A549 (cell line): ENCODE measurements at regions of chr7 and their contacts with region 1.

Region 1: GRCh38 chr7:99040104-99040958 is 103.6 kb downstream of the SMURF1 start:
- DNase-seq: peak; percentile 90 to 95
- ATAC-seq: peak; percentile 80 to 85
- H3K4me3 ChIP-seq: no peak overlapping the region
- H3K27ac ChIP-seq: peak overlapping the region; percentile 69 to 72
- H3K4me1 ChIP-seq: peaks cover 16% of the 10 kb centered on the region
- CTCF ChIP-seq: peak; percentile 83
- EP300 ChIP-seq: no peak
- POLR2A ChIP-seq: no peak
- RAD21 ChIP-seq: peak; percentile 95 to 96

Region 2: GRCh38 chr7:99029466-99030435 is 10.6 kb before region 1 on chr7:
- CTCF ChIA-PET with region 1: interaction called, 19 read pairs
- POLR2A ChIA-PET with region 1: no interaction called
- DNase-seq: no peak
- ATAC-seq: no peak
- H3K4me3 ChIP-seq: no peak overlapping the region
- H3K27ac ChIP-seq: no peak overlapping the region
- H3K4me1 ChIP-seq: peaks cover 8% of the 10 kb centered on the region; the same call in 1 of the 3 replicates
- CTCF ChIP-seq: no peak
- EP300 ChIP-seq: no peak
- POLR2A ChIP-seq: no peak
- RAD21 ChIP-seq: no peak

Region 3: DNA sequence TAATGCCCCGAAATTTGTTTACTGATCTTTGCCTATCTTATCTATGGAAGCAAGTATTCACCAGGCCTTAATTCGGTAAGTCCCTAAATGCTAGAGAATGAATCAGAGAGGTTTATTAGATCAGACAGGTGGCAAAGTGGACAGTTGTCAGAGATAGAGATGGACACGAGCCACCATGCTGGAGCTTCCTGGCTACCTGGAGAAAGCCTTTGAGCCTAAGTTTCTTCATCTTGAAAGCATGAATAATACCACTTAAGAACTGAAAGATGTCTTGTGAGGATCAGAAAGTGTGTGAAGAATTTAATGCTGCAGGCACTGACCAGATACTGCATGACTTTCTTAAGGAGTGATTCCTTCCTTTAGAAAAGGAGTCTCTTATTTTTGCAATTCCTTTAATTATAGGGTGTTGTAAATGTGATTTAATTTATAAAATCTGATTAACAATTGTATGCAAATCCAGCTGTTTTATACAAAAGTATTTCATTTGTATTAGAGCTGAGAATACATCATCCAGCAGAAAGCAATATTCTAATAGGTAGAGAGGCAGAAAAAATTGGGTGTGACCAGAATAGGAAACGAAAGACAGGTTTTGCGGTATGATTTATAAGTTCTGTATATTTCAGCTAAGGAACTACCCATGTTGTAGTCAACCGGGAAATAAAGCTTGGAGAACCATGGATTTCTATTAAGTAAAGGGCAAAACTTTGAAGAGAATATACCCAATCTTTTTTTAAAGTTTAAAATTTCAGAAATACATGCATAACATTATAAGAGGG is 20.9 kb after region 1 on chr7:
- CTCF ChIA-PET with region 1: interaction called, 11 read pairs
- POLR2A ChIA-PET with region 1: no interaction called
- DNase-seq: no peak
- ATAC-seq: no peak
- H3K4me3 ChIP-seq: no peak overlapping the region
- H3K27ac ChIP-seq: no peak overlapping the region
- H3K4me1 ChIP-seq: no peaks in the 10 kb centered on the region
- CTCF ChIP-seq: no peak
- EP300 ChIP-seq: no peak
- POLR2A ChIP-seq: no peak
- RAD21 ChIP-seq: no peak

Region 4: GRCh38 chr7:99137411-99138180 is 97.3 kb after region 1 on chr7:
- CTCF ChIA-PET with region 1: interaction called, 19 read pairs
- POLR2A ChIA-PET with region 1: no interaction called
- DNase-seq: peak; percentile 25 to 36
- ATAC-seq: peak in 1 of 2 experiments; percentile 17; a peak in 2 of 6 replicates
- H3K4me3 ChIP-seq: no peak overlapping the region
- H3K27ac ChIP-seq: 0 out of 6 replicates have a peak overlapping the region, but pooled peaks of 1 of the 2 experiments have one; percentile 24
- H3K4me1 ChIP-seq: peaks cover 80% of the 10 kb centered on the region
- CTCF ChIP-seq: no peak
- EP300 ChIP-seq: no peak
- POLR2A ChIP-seq: no peak
- RAD21 ChIP-seq: no peak

Region 5: DNA sequence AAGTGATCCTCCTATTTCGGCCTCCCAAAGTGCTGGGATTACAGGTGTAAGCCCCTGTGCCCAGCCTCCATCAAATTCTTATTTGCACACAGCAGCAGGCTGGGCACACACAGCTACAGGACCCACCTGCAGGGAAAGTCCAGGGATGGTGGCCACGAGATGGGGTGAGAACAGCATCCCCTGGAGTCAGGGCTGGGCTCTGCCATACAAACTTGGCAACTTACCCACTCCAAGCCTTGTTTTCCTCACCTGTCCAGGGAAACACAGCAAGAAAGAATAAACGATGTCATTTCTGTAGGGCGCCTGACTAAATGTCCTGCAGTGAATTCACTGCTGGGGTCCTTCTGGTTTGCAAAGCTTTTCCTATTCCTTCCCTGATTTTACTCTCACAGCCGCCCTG is 237.8 kb after region 1 on chr7:
- CTCF ChIA-PET with region 1: interaction called, 11 read pairs
- POLR2A ChIA-PET with region 1: no interaction called
- DNase-seq: no peak
- ATAC-seq: peak in 1 of 2 experiments; percentile 15; a peak in 1 of 6 replicates
- H3K4me3 ChIP-seq: no peak overlapping the region
- H3K27ac ChIP-seq: no peak overlapping the region
- H3K4me1 ChIP-seq: peaks cover 16% of the 10 kb centered on the region
- CTCF ChIP-seq: no peak
- EP300 ChIP-seq: no peak
- POLR2A ChIP-seq: no peak
- RAD21 ChIP-seq: no peak

Region 6: GRCh38 chr7:99320371-99320770 is 280.0 kb after region 1 on chr7:
- CTCF ChIA-PET with region 1: interaction called, 197 read pairs
- POLR2A ChIA-PET with region 1: no interaction called
- DNase-seq: no peak
- ATAC-seq: no peak
- H3K4me3 ChIP-seq: no peak overlapping the region
- H3K27ac ChIP-seq: no peak overlapping the region
- H3K4me1 ChIP-seq: peaks cover 4% of the 10 kb centered on the region
- CTCF ChIP-seq: no peak
- EP300 ChIP-seq: no peak
- POLR2A ChIP-seq: no peak
- RAD21 ChIP-seq: no peak